ENCODE measurements at regions of chr9 and their contacts with region 1.

Region 1: GRCh38 chr9:124894741-124895170 is 32.8 kb downstream of the ARPC5L start:
- DNase-seq: peak; percentile 82
- H3K4me3 Mint-ChIP-seq: no peak overlapping the region
- H3K27ac Mint-ChIP-seq: peak overlapping the region; percentile 5
- H3K4me1 Mint-ChIP-seq: peaks cover 9% of the 10 kb centered on the region
- H3K27me3 Mint-ChIP-seq: no peaks in the 10 kb centered on the region

Region 2: GRCh38 chr9:124771021-124771866 is 123.5 kb before region 1 on chr9 and contains the start of gene NR6A1:
- intact Hi-C with region 1: loop called (anchors 1 kb)
- DNase-seq: peak; percentile 99
- H3K4me3 Mint-ChIP-seq: peak within 1 kb of the TSS; percentile 91
- H3K27ac Mint-ChIP-seq: peak within 1 kb of the TSS; percentile 94
- H3K4me1 Mint-ChIP-seq: peaks cover 44% of the 10 kb centered on the region
- H3K27me3 Mint-ChIP-seq: peaks cover 63% of the 10 kb centered on the region
- total RNA-seq, gene NR6A1: 2.3 and 2.7 TPM in 2 replicates

Region 3: GRCh38 chr9:124840300-124840833 is 54.4 kb before region 1 on chr9:
- intact Hi-C with region 1: no loop called
- DNase-seq: no peak
- H3K4me3 Mint-ChIP-seq: no peak overlapping the region
- H3K27ac Mint-ChIP-seq: no peak overlapping the region
- H3K4me1 Mint-ChIP-seq: no peaks in the 10 kb centered on the region
- H3K27me3 Mint-ChIP-seq: peaks cover 10% of the 10 kb centered on the region

Region 4: GRCh38 chr9:124869986-124870560 is 24.7 kb before region 1 on chr9:
- intact Hi-C with region 1: loop called (anchors 2 kb)
- DNase-seq: peak; percentile 94
- H3K4me3 Mint-ChIP-seq: peak overlapping the region; percentile 99
- H3K27ac Mint-ChIP-seq: peak overlapping the region; percentile 99
- H3K4me1 Mint-ChIP-seq: peaks cover 42% of the 10 kb centered on the region
- H3K27me3 Mint-ChIP-seq: no peaks in the 10 kb centered on the region